ENCODE measurements at regions of chr3 and their contacts with region 1.

Region 1: GRCh38 chr3:64848822-64849221 is 161.0 kb upstream of the ADAMTS9 start:
- DNase-seq: no peak
- ATAC-seq: peak in 1 of 4 donors; percentile 52
- H3K4me3 ChIP-seq: no peak overlapping the region
- H3K27ac ChIP-seq: no peak overlapping the region
- H3K4me1 ChIP-seq: no peaks in the 10 kb centered on the region
- H3K27me3 ChIP-seq: no peaks in the 10 kb centered on the region
- CTCF ChIP-seq: no peak
- POLR2A ChIP-seq: no peak

Region 2: DNA sequence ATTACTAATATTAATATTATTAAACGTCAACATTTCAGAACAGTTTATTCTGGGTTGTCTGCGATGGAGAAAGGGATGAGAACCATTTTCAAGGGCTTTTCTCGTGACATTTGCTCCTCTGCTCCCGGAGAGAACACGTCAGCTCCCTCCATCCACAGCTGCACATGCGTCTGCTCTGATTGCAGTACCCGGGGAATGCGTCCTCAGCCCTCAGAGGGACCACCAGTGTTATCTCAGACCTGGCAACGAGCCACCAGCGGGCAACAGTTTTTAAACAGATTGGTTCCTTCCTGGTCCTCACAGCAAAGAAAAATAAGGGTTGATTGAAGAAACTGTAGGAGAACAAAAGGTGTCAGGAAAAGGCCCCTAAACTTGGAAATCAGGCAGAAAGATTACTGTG is 41.2 kb after region 1 on chr3:
- intact Hi-C with region 1: loop called in 1 of 10 experiments (anchors 2 kb)
- DNase-seq: peak; percentile 72 to 83 (median 81)
- ATAC-seq: peak; percentile 46 to 90 (median 74)
- H3K4me3 ChIP-seq: no peak overlapping the region
- H3K27ac ChIP-seq: peak overlapping the region; percentile 28 to 83 (median 62)
- H3K4me1 ChIP-seq: peaks cover 0 to 46% (median 30%) of the 10 kb centered on the region in 12 donors
- H3K27me3 ChIP-seq: no peaks in the 10 kb centered on the region
- CTCF ChIP-seq: no peak
- POLR2A ChIP-seq: no peak